Esophagus muscularis mucosa (tissue), 4 donors: ENCODE measurements at regions of chr10 and their contacts with region 1.

Region 1: GRCh38 chr10:118742782-118743181 is 12.0 kb downstream of the CACUL1 start:
- DNase-seq: no peak
- H3K4me3 ChIP-seq: no peak overlapping the region
- H3K27ac ChIP-seq: peak overlapping the region in 1 of 4 donors; percentile 18
- H3K4me1 ChIP-seq: peaks cover 41 to 78% (median 71%) of the 10 kb centered on the region in 4 donors
- H3K27me3 ChIP-seq: no peaks in the 10 kb centered on the region
- CTCF ChIP-seq: no peak
- EP300 ChIP-seq: no peak
- POLR2A ChIP-seq: no peak

Region 2: DNA sequence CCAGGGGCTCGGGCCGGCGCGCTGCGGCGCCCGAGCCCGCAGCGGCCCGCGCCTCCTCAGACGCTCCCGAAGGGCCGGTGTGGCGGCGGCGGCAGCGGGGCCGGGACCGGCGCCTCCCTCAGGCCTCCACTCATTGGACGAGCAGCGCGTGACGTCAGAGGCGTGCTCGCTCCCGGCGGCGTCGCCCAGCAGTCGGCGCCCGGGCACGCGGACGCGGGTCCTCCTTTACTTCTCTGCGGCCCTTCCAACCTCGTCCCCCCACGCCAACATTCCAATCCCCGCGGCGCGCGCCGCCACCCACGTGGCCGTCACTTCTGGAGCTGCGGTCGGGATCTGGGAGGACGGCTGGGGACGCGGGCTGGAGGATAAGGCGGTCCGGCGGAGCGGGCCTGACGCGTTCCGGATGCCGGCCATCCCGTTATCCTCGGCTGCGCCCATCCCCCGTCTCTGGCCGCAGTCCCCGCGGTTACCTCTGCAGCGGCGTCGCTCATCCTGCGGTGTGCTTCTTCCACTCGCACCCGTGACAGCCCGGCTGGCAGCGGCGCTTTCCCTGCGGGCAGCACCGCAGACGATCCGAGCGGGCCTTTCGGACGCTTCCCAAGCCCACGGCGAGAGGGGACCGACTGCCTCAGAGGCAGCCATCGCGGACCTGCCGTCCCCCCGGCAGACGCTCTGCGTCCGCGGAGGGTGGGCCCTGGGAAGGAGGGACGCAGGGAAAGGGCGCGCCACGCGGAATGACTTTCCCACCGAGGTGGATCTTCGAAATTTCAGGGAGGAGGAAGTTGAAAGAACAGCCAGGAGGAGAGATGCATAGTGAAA is 1367.2 kb before region 1 on chr10 and contains the start of gene PDZD8:
- intact Hi-C with region 1: loop called (anchors 10 kb)
- DNase-seq: peak; percentile 99
- H3K4me3 ChIP-seq: peak within 1 kb of the TSS; percentile 75 to 95 (median 92)
- H3K27ac ChIP-seq: peak within 1 kb of the TSS; percentile 97 to 99 (median 98)
- H3K4me1 ChIP-seq: peaks cover 36 to 44% (median 39%) of the 10 kb centered on the region in 4 donors
- H3K27me3 ChIP-seq: peaks cover 0 to 16% (median 0%) of the 10 kb centered on the region in 4 donors
- CTCF ChIP-seq: peak in 1 of 3 experiments; percentile 10
- EP300 ChIP-seq: no peak
- POLR2A ChIP-seq: peak; percentile 51
- total RNA-seq, gene PDZD8: 32.1 to 43.7 (median 38.0) TPM

Region 3: DNA sequence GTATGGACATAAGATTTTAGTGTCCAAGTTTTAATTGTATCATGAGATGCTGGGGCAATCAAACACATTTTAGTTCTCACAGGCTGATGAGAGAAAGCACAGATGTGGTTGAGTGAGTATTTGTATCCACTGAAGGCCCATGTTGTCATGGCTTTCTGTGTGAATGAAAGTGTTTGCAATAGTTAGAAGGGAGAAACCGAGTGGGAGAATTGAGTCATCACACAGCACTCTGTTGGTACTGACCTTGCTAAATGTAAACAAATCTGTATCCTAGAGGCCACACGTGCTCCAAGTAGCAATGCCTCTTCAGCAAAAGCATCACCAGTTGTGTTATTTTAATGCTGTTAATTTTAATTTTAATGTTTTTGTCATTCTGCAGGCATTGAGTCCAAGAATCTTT is 1079.0 kb before region 1 on chr10:
- intact Hi-C with region 1: no loop called
- DNase-seq: no peak
- H3K4me3 ChIP-seq: no peak overlapping the region
- H3K27ac ChIP-seq: no peak overlapping the region
- H3K4me1 ChIP-seq: no peaks in the 10 kb centered on the region
- H3K27me3 ChIP-seq: no peaks in the 10 kb centered on the region
- CTCF ChIP-seq: no peak
- EP300 ChIP-seq: no peak
- POLR2A ChIP-seq: no peak

Region 4: GRCh38 chr10:118901380-118901779 is 158.6 kb after region 1 on chr10:
- intact Hi-C with region 1: no loop called
- DNase-seq: peak; percentile 74
- H3K4me3 ChIP-seq: no peak overlapping the region
- H3K27ac ChIP-seq: no peak overlapping the region
- H3K4me1 ChIP-seq: peaks cover 0 to 6% (median 0%) of the 10 kb centered on the region in 4 donors
- H3K27me3 ChIP-seq: no peaks in the 10 kb centered on the region
- CTCF ChIP-seq: no peak
- EP300 ChIP-seq: no peak
- POLR2A ChIP-seq: no peak